Activated B cell treated with CpG ODN at 0.5 μM for 24 hours (primary cell): ENCODE measurements at regions of chr7 and their contacts with region 1.

Region 1: DNA sequence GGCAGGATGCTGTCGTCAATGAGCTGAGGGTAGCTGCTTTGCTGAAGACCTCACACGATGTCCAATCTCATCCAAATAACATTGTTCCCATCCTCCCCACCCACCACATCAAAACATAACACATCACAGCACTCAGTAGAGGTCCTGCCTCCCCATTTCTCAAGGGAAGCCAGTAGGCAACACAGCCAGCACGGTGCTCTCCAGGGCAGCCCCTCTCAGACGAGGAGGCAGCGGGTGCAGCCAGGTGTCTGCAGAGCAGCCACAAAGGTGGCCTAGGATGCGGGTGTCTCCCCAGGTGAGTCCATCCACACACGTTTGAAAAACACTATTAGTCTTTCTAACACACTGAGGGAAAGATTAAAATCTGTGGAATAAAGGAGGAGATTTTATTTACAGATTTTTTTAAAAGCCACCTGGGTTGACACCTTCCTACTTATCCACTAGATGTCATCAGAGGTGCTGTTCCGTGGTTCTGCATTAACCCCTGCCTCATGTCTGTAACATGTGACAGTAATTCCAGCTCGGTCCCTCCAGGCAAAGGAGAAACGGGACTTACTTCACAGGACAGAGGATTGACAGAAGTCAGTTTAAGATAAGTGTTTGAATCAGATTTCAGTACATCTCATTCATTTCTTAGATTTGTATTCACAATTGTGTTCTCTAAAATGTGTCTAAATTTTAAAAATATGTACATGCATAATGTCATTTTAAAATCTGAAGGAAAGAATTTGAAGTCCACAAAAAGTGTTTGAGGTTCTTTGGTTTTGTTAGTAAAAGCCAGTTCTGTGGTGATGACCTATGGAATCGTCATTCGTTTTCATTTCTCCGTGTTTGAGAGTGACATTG is 68.0 kb downstream of the LANCL2 start:
- DNase-seq: no peak
- ATAC-seq: peak; percentile 70
- H3K4me3 Mint-ChIP-seq: no peak overlapping the region
- H3K27ac Mint-ChIP-seq: no peak overlapping the region
- H3K4me1 Mint-ChIP-seq: no peaks in the 10 kb centered on the region
- H3K27me3 Mint-ChIP-seq: no peaks in the 10 kb centered on the region
- CTCF ChIP-seq: no peak

Region 2: GRCh38 chr7:55005241-55005851 is 427.8 kb before region 1 on chr7:
- CTCF ChIA-PET with region 1: no interaction called
- POLR2A ChIA-PET with region 1: no interaction called
- intact Hi-C with region 1: no loop called
- DNase-seq: no peak
- ATAC-seq: no peak
- H3K4me3 Mint-ChIP-seq: no peak overlapping the region
- H3K27ac Mint-ChIP-seq: no peak overlapping the region
- H3K4me1 Mint-ChIP-seq: no peaks in the 10 kb centered on the region
- H3K27me3 Mint-ChIP-seq: peaks cover 11% of the 10 kb centered on the region
- CTCF ChIP-seq: no peak

Region 3: GRCh38 chr7:55387062-55387965 is 45.8 kb before region 1 on chr7:
- CTCF ChIA-PET with region 1: no interaction called
- POLR2A ChIA-PET with region 1: no interaction called
- intact Hi-C with region 1: no loop called
- DNase-seq: no peak
- ATAC-seq: no peak
- H3K4me3 Mint-ChIP-seq: no peak overlapping the region
- H3K27ac Mint-ChIP-seq: no peak overlapping the region
- H3K4me1 Mint-ChIP-seq: no peaks in the 10 kb centered on the region
- H3K27me3 Mint-ChIP-seq: no peaks in the 10 kb centered on the region
- CTCF ChIP-seq: no peak

Region 4: DNA sequence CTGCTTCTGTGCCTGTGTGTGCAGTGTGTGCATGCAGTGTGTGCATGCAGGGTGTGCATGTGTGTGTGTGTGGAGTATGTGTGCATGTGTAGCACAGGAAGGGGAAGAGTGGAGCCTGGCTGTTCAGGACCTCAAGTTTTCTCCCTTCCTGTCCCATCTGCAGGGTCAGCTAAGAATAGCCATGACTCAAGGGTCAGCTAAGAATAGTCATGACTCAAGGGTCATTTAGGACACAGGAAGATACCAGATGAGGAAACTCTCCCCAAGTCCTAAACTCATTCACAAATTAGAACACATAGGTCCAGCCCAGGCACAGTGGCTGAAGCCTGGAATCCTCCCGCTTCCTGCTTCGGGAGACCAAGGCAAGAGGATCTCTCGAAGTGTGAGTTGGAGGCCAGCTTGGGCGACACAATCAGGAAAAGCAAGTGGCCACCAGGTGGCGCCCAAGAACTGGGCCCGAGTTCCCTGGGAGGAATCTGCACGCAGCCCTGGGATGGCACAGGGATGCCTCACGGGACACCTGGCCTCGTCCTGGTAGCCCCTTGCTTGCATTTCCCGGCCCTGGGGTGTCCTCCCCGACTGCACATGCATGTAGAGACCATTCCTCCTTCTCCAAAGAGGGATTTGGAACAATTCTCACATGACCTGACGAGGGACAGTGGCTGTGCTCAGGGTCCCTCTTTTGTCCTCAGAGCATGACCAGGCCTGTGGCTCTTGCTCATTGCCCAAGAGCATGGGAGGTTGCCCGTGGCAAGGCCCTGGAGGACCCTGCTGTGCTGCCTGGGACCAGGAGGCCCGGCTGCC is 160.6 kb after region 1 on chr7:
- CTCF ChIA-PET with region 1: interaction called, 37 read pairs
- POLR2A ChIA-PET with region 1: no interaction called
- intact Hi-C with region 1: loop called (anchors 1 kb)
- DNase-seq: peak; percentile 58
- ATAC-seq: no peak
- H3K4me3 Mint-ChIP-seq: no peak overlapping the region
- H3K27ac Mint-ChIP-seq: no peak overlapping the region
- H3K4me1 Mint-ChIP-seq: peaks cover 41% of the 10 kb centered on the region
- H3K27me3 Mint-ChIP-seq: no peaks in the 10 kb centered on the region
- CTCF ChIP-seq: no peak

Region 5: GRCh38 chr7:55723621-55723941 is 290.4 kb after region 1 on chr7:
- CTCF ChIA-PET with region 1: no interaction called
- POLR2A ChIA-PET with region 1: no interaction called
- intact Hi-C with region 1: loop called (anchors 10 kb)
- DNase-seq: no peak
- ATAC-seq: no peak
- H3K4me3 Mint-ChIP-seq: no peak overlapping the region
- H3K27ac Mint-ChIP-seq: no peak overlapping the region
- H3K4me1 Mint-ChIP-seq: no peaks in the 10 kb centered on the region
- H3K27me3 Mint-ChIP-seq: peaks cover 2% of the 10 kb centered on the region
- CTCF ChIP-seq: no peak

Region 6: GRCh38 chr7:55964261-55965099 is 531.3 kb after region 1 on chr7 and contains the start of gene NIPSNAP2:
- CTCF ChIA-PET with region 1: no interaction called
- POLR2A ChIA-PET with region 1: no interaction called
- intact Hi-C with region 1: loop called (anchors 2 kb)
- DNase-seq: peak; percentile 79
- ATAC-seq: peak; percentile 88
- H3K4me3 Mint-ChIP-seq: peak within 1 kb of the TSS; percentile 86
- H3K27ac Mint-ChIP-seq: peak within 1 kb of the TSS; percentile 88
- H3K4me1 Mint-ChIP-seq: peaks cover 25% of the 10 kb centered on the region
- H3K27me3 Mint-ChIP-seq: no peaks in the 10 kb centered on the region
- CTCF ChIP-seq: no peak
- total RNA-seq, gene NIPSNAP2: 33.7 and 43.8 TPM in 2 replicates